ENCODE measurements at regions of chr2 and their contacts with region 1.

Region 1: DNA sequence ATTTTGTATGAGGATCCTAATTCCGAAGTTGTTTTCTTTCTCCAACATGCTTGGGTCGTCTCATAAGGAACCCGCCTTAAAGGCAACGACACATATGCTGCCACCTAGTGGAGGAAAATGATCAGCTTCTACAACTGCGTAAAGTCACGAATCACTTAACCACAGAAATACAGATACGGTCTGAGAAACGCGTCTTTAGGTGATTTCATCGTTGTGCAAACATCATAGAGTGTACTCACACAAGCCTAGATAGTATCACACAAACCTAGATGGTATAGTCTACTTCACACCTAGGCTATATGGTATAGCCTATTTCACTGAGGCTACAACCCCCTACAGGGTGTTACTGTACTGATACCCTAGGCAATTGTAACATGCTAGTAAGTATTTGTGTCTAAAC is 13.1 kb downstream of the GNLY start:
- DNase-seq: peak in 8 of 9 donors; percentile 38 to 75 (median 66)
- ATAC-seq: peak; percentile 85
- H3K4me3 ChIP-seq: no peak overlapping the region
- H3K4me3 Mint-ChIP-seq: peak overlapping the region in 1 of 10 donors; percentile 6
- H3K27ac ChIP-seq: no peak overlapping the region
- H3K27ac Mint-ChIP-seq: peak overlapping the region in 1 of 9 donors; percentile 90
- H3K4me1 ChIP-seq: peaks cover 0 to 25% of the 10 kb centered on the region in 2 donors
- H3K4me1 Mint-ChIP-seq: peaks cover 0 to 74% (median 5%) of the 10 kb centered on the region in 7 donors
- H3K27me3 ChIP-seq: peaks cover 0 to 4% of the 10 kb centered on the region in 2 donors
- H3K27me3 Mint-ChIP-seq: peaks cover 0 to 7% (median 4%) of the 10 kb centered on the region in 5 donors

Region 2: GRCh38 chr2:85390941-85391669 is 316.2 kb before region 1 on chr2:
- CTCF ChIA-PET with region 1: interaction called, 3 read pairs
- POLR2A ChIA-PET with region 1: no interaction called
- intact Hi-C with region 1: loop called (anchors 1 kb)
- DNase-seq: peak; percentile 52 to 79 (median 71)
- ATAC-seq: peak; percentile 76
- H3K4me3 ChIP-seq: no peak overlapping the region
- H3K4me3 Mint-ChIP-seq: no peak overlapping the region
- H3K27ac ChIP-seq: no peak overlapping the region
- H3K27ac Mint-ChIP-seq: peak overlapping the region in 5 of 9 donors; percentile 9 to 65 (median 38)
- H3K4me1 ChIP-seq: peaks cover 0 to 11% of the 10 kb centered on the region in 2 donors
- H3K4me1 Mint-ChIP-seq: peaks cover 5 to 27% (median 15%) of the 10 kb centered on the region in 7 donors
- H3K27me3 ChIP-seq: no peaks in the 10 kb centered on the region
- H3K27me3 Mint-ChIP-seq: no peaks in the 10 kb centered on the region

Region 3: GRCh38 chr2:85642725-85643124 is 64.6 kb before region 1 on chr2:
- CTCF ChIA-PET with region 1: interaction called, 14 read pairs
- POLR2A ChIA-PET with region 1: no interaction called
- intact Hi-C with region 1: loop called in 1 of 2 experiments (anchors 1 kb)
- DNase-seq: no peak
- ATAC-seq: no peak
- H3K4me3 ChIP-seq: no peak overlapping the region
- H3K4me3 Mint-ChIP-seq: no peak overlapping the region
- H3K27ac ChIP-seq: no peak overlapping the region
- H3K27ac Mint-ChIP-seq: peak overlapping the region in 2 of 9 donors; percentile 30 to 45
- H3K4me1 ChIP-seq: no peaks in the 10 kb centered on the region
- H3K4me1 Mint-ChIP-seq: peaks cover 0 to 21% (median 0%) of the 10 kb centered on the region in 7 donors
- H3K27me3 ChIP-seq: no peaks in the 10 kb centered on the region
- H3K27me3 Mint-ChIP-seq: no peaks in the 10 kb centered on the region

Region 4: DNA sequence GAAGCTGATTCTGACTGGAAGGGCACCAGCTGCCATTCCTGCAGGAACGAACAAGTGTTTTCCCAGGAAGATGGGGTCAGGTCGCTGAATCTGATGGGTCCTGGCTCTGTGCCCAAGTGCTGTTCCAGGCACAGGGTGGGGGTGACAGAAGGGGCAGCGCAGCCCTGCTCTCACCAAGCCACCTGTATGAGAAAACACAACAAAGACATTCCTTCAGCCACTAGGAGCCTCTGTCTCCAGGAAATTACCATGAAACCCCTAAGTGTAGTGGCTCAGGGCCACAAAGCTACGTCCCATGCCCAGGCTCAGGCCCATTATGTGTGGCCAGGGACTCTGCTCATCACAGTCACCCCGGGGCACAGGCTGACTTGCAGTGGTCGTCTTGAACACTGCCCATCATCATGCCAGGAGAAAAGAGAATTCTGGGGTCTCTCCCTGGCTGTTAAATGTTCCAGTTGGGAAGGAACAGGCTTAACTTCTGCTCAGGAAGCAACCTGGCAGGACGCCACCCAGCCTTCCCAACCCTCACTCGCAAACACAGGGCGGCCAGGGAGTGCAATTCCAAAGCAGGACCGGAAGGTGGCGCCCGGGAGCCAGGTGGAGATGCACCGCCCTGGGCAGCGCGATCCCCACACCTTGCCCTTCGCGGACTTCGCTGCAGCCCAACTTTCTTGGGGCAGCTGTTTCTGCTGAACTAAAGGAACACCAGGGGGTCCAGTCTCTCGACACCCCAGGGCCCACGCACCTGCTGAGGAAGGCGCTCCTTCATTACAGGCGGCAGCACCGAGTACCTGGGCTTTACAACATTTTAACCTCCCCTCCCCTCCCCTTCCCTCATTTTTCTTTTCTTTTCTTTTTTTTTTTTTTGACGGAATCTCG is 28.3 kb before region 1 on chr2:
- CTCF ChIA-PET with region 1: interaction called, 3 read pairs
- POLR2A ChIA-PET with region 1: no interaction called
- intact Hi-C with region 1: loop called (anchors 1 kb)
- DNase-seq: peak; percentile 43 to 86 (median 71)
- ATAC-seq: peak; percentile 97
- H3K4me3 ChIP-seq: no peak overlapping the region
- H3K4me3 Mint-ChIP-seq: peak overlapping the region in 7 of 10 donors; percentile 13 to 62 (median 52)
- H3K27ac ChIP-seq: no peak overlapping the region
- H3K27ac Mint-ChIP-seq: peak overlapping the region in 1 of 9 donors; percentile 57
- H3K4me1 ChIP-seq: peaks cover 0 to 7% of the 10 kb centered on the region in 2 donors
- H3K4me1 Mint-ChIP-seq: peaks cover 0 to 30% (median 0%) of the 10 kb centered on the region in 7 donors
- H3K27me3 ChIP-seq: no peaks in the 10 kb centered on the region
- H3K27me3 Mint-ChIP-seq: peaks cover 0 to 7% (median 3%) of the 10 kb centered on the region in 5 donors

Measured in naive thymus-derived CD4-positive, alpha-beta T cell (primary cell).